Dorsolateral prefrontal cortex (tissue), 120 donors: ENCODE measurements at regions of chr12 and their contacts with region 1.

Region 1: GRCh38 chr12:85866986-85867776 is 6.9 kb upstream of the NTS start:
- DNase-seq: no peak
- H3K4me3 ChIP-seq: no peak overlapping the region
- H3K27ac ChIP-seq: no peak overlapping the region
- H3K27me3 ChIP-seq: peaks cover 0 to 13% (median 0%) of the 10 kb centered on the region in 45 donors
- CTCF ChIP-seq: peak; percentile 55 to 84 (median 72)

Region 2: DNA sequence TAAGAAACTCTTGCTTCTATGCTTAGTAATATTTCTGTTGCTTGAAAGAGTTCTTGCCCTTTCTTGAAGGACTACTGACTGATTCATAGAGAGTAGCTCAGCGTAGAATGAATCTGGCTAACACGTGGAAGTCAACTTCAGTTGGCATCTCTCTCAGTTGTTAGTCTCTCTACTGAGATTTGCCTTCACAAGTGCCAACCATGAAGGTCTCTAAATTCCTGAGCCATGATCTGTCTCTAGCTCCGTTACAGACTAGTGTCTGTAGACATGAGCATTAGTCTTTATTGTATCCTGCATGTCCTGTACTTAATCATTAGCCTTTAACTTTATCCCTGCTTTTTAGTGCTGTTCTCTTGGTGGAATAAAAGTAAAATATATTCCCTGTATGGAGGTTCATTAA is 606.3 kb before region 1 on chr12:
- intact Hi-C with region 1: no loop called
- DNase-seq: no peak
- H3K4me3 ChIP-seq: no peak overlapping the region
- H3K27ac ChIP-seq: no peak overlapping the region
- H3K27me3 ChIP-seq: no peaks in the 10 kb centered on the region
- CTCF ChIP-seq: no peak

Region 3: DNA sequence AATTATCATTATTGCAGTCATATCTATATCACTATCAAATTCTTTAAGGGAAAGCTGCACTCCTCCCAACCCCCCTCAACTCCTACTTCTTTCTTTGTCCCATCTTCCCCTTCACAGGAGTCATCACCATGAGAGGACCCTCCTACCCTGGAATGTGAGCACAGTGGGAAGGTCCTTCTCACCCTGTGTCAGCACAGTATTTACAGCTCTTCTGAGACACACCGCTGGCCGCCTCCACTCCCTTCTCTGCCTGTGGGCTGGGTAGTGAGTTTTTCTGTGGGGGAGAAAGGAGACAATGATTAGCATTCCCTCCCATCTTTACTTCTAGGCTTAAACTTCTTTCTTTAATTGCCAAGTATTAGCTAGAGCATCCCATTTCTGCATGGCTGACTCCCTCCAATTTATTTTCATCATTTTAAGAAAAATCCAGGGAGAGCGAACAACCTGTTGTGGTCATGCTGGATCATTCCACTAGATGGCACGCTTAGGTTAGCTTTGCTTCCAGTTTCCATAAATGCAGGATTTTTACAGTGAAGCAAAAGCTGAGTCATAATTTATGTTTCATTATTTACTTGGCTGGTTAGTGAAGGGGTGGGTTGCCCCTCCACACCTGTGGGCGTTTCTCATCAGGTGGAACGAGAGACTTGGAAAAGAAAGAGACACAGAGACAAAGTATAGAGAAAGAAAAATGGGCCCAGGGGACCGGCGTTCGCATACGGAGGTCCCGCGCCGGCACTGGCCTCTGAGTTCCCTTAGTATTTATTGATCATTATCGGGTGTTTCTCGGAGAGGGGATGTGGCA is 398.6 kb before region 1 on chr12:
- intact Hi-C with region 1: loop called (anchors 5 to 10 kb)
- DNase-seq: peak in 3 of 10 donors; percentile 14 to 27 (median 18)
- H3K4me3 ChIP-seq: peak overlapping the region; percentile 12 to 68 (median 51)
- H3K27ac ChIP-seq: no peak overlapping the region
- H3K27me3 ChIP-seq: peaks cover 0 to 19% (median 0%) of the 10 kb centered on the region in 45 donors
- CTCF ChIP-seq: peak; percentile 60 to 86 (median 75)

Region 4: DNA sequence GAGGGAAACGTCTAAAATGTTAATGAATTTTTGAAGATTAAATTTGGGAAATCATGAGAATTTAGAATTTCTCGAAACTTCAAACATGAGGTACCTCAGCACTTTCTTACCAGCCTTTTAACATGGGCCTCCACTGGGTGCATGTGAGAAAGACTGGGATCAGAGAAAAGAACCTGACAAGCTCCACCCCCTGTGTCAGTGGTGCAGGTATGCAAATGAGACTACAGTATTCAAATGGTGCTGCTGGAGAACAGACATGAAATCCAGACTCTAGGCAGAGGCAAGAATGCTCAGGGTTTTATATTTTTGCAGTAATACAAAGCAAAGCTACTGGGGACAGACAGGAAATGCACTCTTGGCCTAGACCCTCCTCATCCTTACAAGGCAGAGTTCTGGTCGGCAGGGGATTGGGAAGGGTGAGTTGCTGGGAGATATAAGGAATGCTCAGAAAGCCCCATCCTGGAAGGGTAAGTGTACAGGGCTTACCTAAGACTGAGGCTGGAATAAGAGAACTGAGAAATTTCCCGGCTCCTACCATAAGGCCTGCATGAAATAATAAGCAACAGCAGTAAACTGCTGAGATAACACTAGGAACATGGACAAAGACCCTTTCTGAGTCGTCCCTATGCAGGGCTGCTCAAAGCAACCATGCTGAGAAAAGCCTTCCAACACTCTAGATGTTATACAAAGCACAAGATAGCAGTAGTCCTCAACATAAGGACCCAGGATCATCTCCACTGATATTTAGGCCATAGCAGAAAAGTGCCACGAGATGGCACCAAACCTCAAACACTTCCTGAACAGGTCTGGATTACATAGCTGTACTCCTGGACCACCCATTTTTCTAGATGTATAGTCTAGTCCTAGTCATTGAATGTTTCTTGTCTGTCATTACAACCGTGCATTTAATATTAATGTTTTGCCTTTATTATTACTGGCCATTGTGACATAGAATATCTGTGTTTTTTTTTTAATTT is 291.8 kb before region 1 on chr12:
- intact Hi-C with region 1: loop called in 1 of 2 experiments (anchors 5 kb)
- DNase-seq: peak in 3 of 10 donors; percentile 20 to 41 (median 39)
- H3K4me3 ChIP-seq: no peak overlapping the region
- H3K27ac ChIP-seq: no peak overlapping the region
- H3K27me3 ChIP-seq: no peaks in the 10 kb centered on the region
- CTCF ChIP-seq: peak in 55 of 56 donors; percentile 22 to 76 (median 50)